Spleen (tissue), 13 donors: ENCODE measurements at regions of chr1 and their contacts with region 1.

Region 1: GRCh38 chr1:150925816-150926741 is at the start of gene SETDB1:
- DNase-seq: peak; percentile 97
- H3K4me3 ChIP-seq: peak within 1 kb of the TSS; percentile 39 to 78 (median 66)
- H3K27ac ChIP-seq: peak within 1 kb of the TSS; percentile 64 to 95 (median 89)
- H3K4me1 ChIP-seq: peaks cover 10 to 47% (median 27%) of the 10 kb centered on the region in 6 donors
- H3K27me3 ChIP-seq: no peaks in the 10 kb centered on the region
- CTCF ChIP-seq: peak in 3 of 11 experiments; percentile 27 to 30 (median 29)
- POLR2A ChIP-seq: peak in 1 of 3 donors; percentile 25
- total RNA-seq, gene SETDB1: 50.0 to 82.4 (median 62.7) TPM

Region 2: DNA sequence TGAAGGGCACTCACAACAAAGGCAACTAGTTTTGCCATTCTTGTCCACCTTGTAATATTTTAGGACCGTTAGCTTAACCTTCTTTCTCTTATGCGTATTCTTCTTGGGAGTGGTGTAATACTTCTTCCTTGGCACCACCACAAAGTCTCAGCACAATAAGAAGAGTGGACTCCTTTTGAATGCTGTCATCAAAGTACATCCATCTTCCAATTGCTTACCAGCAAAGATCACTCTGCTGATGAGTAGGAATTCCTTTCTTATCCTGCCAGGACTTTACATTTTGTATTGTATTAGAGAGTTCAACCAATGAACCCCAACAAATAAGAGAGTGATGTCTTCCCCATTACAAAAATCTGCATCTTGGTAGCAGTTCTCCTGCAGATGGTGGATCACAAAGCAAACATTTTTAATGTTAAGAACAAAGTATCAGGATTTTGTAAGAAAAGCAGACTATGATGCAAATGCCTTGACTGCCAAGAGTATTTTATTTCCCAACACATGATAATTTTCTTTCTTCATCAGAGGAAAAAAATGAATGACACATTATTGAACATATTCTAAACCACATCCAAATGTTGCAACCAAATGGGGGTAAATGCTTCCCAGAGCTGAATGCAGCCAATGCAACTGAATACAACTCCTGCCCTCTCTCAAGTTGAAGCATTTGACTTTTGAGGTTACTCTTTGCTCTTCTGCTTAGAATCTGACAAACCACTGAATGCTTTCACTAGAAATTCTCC is 44.6 kb before region 1 on chr1:
- intact Hi-C with region 1: loop called (anchors 5 kb)
- DNase-seq: no peak
- H3K4me3 ChIP-seq: no peak overlapping the region
- H3K27ac ChIP-seq: peak overlapping the region in 6 of 8 donors; percentile 14 to 68 (median 54)
- H3K4me1 ChIP-seq: peaks cover 0 to 27% (median 11%) of the 10 kb centered on the region in 6 donors
- H3K27me3 ChIP-seq: no peaks in the 10 kb centered on the region
- CTCF ChIP-seq: no peak
- POLR2A ChIP-seq: no peak

Region 3: GRCh38 chr1:150979092-150980056 is 53.3 kb after region 1 on chr1:
- intact Hi-C with region 1: loop called (anchors 10 kb)
- DNase-seq: peak; percentile 92
- H3K4me3 ChIP-seq: peak overlapping the region; percentile 0 to 62 (median 28)
- H3K27ac ChIP-seq: peak overlapping the region in 7 of 8 donors; percentile 15 to 97 (median 68)
- H3K4me1 ChIP-seq: peaks cover 27 to 51% (median 49%) of the 10 kb centered on the region in 6 donors
- H3K27me3 ChIP-seq: no peaks in the 10 kb centered on the region
- CTCF ChIP-seq: peak; percentile 95 to 100 (median 99)
- POLR2A ChIP-seq: no peak